ENCODE measurements at regions of chr11 and their contacts with region 1.

Region 1: GRCh38 chr11:65540297-65541092 is 15.6 kb downstream of the SCYL1 start:
- DNase-seq: peak; percentile 93
- ATAC-seq: peak; percentile 83
- H3K4me3 Mint-ChIP-seq: peak overlapping the region; percentile 68
- H3K27ac Mint-ChIP-seq: no peak overlapping the region
- H3K4me1 Mint-ChIP-seq: peaks cover 3% of the 10 kb centered on the region
- H3K27me3 Mint-ChIP-seq: peaks cover 60% of the 10 kb centered on the region
- CTCF ChIP-seq: peak; percentile 92

Region 2: GRCh38 chr11:65487413-65488272 is 52.9 kb before region 1 on chr11:
- CTCF ChIA-PET with region 1: interaction called, 17 read pairs
- POLR2A ChIA-PET with region 1: no interaction called
- DNase-seq: peak; percentile 96
- ATAC-seq: peak; percentile 86
- H3K4me3 Mint-ChIP-seq: peak overlapping the region; percentile 62
- H3K27ac Mint-ChIP-seq: peak overlapping the region; percentile 100
- H3K4me1 Mint-ChIP-seq: peaks cover 82% of the 10 kb centered on the region
- H3K27me3 Mint-ChIP-seq: peaks cover 4% of the 10 kb centered on the region
- CTCF ChIP-seq: no peak

Region 3: DNA sequence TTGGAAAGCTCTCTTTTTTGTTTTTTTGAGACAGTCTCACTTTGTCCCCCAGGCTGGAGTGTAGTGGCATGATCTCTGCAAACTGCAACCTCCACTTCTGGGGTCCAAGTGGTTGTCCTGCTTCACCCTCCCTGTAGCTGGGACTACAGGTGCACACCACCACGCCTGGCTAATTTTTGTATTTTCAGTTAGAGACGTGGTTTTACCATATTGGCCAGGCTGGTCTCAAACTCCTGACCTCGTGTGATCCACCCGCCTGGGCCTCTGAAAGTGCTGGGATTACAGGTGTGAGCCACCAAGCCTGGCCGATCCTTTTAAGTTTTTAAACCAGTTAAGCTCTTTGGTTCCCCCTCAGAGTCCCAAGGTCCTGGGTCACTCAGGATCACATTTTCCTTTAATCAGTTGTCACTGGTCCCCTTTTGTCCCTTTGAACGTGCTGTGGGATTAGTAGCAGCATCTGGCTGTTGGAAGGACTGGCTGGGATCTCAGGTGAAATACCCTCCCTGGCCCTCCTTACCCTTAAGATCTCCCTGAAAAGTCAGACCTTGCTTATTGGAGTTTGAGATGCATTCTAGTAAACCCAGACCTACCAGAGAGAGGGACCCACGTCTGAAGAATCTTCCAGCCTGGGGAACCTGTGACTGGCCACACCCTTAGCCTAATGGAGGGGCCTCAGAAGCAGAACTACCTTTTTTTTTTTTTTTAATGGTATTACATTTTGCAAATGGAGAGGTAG is 33.6 kb before region 1 on chr11:
- CTCF ChIA-PET with region 1: interaction called, 17 read pairs
- POLR2A ChIA-PET with region 1: interaction called, 3 read pairs
- DNase-seq: no peak
- ATAC-seq: peak; percentile 49
- H3K4me3 Mint-ChIP-seq: no peak overlapping the region
- H3K27ac Mint-ChIP-seq: peak overlapping the region; percentile 92
- H3K4me1 Mint-ChIP-seq: peaks cover 55% of the 10 kb centered on the region
- H3K27me3 Mint-ChIP-seq: no peaks in the 10 kb centered on the region
- CTCF ChIP-seq: no peak

Region 4: DNA sequence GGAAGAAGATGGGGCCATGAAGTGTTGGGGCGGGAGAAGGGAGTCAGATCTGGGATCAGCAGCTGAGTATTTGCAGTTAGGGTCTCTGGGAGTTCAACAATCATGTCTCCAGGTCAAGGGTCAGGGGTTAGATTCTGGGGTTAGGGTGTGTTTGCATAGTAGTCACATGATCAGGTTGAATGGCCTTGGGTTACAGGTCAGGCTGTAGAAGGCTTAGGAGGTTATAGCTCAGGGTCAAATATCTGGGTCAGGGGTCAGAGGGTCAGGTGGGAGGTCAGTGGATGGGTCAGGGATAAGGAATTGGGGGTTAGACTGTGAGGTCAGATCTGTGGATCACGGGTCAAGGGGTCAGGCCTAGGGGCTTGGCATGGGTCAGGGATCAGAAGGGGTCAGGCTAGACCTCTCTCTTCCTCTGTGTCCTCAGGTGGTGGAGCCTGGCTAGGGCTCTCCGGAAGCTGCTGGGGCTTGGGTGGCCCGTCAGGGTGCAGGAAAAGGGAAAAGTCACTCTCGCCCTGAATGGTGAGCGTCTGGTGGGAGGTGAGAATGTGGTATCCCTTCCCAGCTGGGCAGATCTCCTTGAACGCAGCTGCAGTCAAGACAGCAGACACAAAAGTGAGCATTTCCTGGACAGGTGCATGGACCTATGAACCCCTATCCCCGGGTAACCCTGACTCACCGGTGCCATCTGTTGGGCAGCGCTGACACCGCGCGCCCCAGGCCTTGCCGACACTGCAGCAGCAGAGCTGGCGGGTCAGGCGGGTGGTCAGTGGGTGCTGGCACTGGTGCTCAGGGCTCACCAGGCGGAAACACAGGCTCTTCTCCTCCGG is 11.3 kb after region 1 on chr11:
- CTCF ChIA-PET with region 1: interaction called, 171 read pairs
- POLR2A ChIA-PET with region 1: interaction called, 5 read pairs
- DNase-seq: peak; percentile 89
- ATAC-seq: peak; percentile 64
- H3K4me3 Mint-ChIP-seq: peak overlapping the region; percentile 36; the same call in 1 of the 2 replicates
- H3K27ac Mint-ChIP-seq: no peak overlapping the region
- H3K4me1 Mint-ChIP-seq: peaks cover 42% of the 10 kb centered on the region
- H3K27me3 Mint-ChIP-seq: peaks cover 80% of the 10 kb centered on the region
- CTCF ChIP-seq: peak; percentile 49; the same call in 1 of the 2 replicates

Region 5: GRCh38 chr11:65569973-65570918 is 29.8 kb after region 1 on chr11 and contains the start of gene ZNRD2:
- CTCF ChIA-PET with region 1: interaction called, 270 read pairs
- POLR2A ChIA-PET with region 1: interaction called, 9 read pairs
- DNase-seq: peak; percentile 98
- ATAC-seq: peak; percentile 75
- H3K4me3 Mint-ChIP-seq: peak within 1 kb of the TSS; percentile 99
- H3K27ac Mint-ChIP-seq: peak within 1 kb of the TSS; percentile 98
- H3K4me1 Mint-ChIP-seq: peaks cover 41% of the 10 kb centered on the region
- H3K27me3 Mint-ChIP-seq: peaks cover 7% of the 10 kb centered on the region
- CTCF ChIP-seq: no peak; the same call in 1 of the 2 replicates
- total RNA-seq, gene ZNRD2: 54.8 to 70.9 TPM (median 55.7 TPM) in 3 replicates

Region 6: GRCh38 chr11:65606876-65607613 is 66.5 kb after region 1 on chr11:
- CTCF ChIA-PET with region 1: interaction called, 32 read pairs
- POLR2A ChIA-PET with region 1: no interaction called
- DNase-seq: peak; percentile 97
- ATAC-seq: peak; percentile 98
- H3K4me3 Mint-ChIP-seq: peak overlapping the region; percentile 70
- H3K27ac Mint-ChIP-seq: peak overlapping the region; percentile 65; the same call in 1 of the 2 replicates
- H3K4me1 Mint-ChIP-seq: peaks cover 18% of the 10 kb centered on the region
- H3K27me3 Mint-ChIP-seq: peaks cover 8% of the 10 kb centered on the region; the same call in 1 of the 2 replicates
- CTCF ChIP-seq: no peak

Region 7: DNA sequence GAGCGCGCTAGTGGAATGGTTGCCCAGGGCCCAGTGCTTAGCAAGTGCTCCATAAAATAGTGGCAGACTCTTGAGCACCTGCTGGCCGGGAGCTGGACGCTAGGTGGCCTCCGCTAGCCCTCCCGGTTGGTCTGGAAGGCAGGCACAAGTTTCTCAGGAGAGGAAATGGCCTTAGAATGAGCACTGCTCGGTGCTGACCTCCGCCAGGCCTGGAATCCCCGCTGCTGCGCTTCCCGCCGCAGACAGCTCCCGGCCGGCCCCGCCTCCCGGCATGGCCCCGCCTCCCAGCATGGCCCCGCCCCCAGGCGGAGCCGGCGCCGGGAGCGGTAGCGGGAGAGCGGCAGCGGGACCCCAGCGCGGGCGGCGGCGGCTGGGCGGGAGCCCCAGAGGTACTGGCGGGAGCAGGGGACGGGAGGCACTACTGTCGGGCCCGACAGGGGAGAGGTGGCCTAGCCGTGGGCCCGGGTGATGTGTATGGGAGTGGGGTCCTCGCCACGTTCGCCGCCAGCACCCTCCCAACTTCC is 97.4 kb after region 1 on chr11 and contains the start of gene SIPA1:
- CTCF ChIA-PET with region 1: interaction called, 16 read pairs
- POLR2A ChIA-PET with region 1: no interaction called
- DNase-seq: peak; percentile 89
- ATAC-seq: peak; percentile 70
- H3K4me3 Mint-ChIP-seq: peak within 1 kb of the TSS; percentile 81
- H3K27ac Mint-ChIP-seq: peak within 1 kb of the TSS; percentile 94
- H3K4me1 Mint-ChIP-seq: peaks cover 22% of the 10 kb centered on the region
- H3K27me3 Mint-ChIP-seq: no peaks in the 10 kb centered on the region
- CTCF ChIP-seq: no peak
- total RNA-seq, gene SIPA1: 63.3 to 71.7 TPM (median 65.4 TPM) in 3 replicates

Measured in WTC11 (cell line).